Calu3 (cell line): ENCODE measurements at regions of chr4 and their contacts with region 1.

Region 1: GRCh38 chr4:186765138-186765537 is 41.5 kb upstream of the FAT1 start:
- DNase-seq: peak; percentile 75
- H3K4me3 Mint-ChIP-seq: peak overlapping the region; percentile 46
- H3K27ac Mint-ChIP-seq: peak overlapping the region; percentile 89
- H3K4me1 Mint-ChIP-seq: peaks cover 21% of the 10 kb centered on the region
- H3K27me3 Mint-ChIP-seq: no peaks in the 10 kb centered on the region
- CTCF ChIP-seq: no peak

Region 2: GRCh38 chr4:186712690-186713089 is 52.4 kb before region 1 on chr4:
- CTCF ChIA-PET with region 1: no interaction called
- intact Hi-C with region 1: no loop called
- DNase-seq: no peak
- H3K4me3 Mint-ChIP-seq: no peak overlapping the region
- H3K27ac Mint-ChIP-seq: no peak overlapping the region
- H3K4me1 Mint-ChIP-seq: peaks cover 36% of the 10 kb centered on the region
- H3K27me3 Mint-ChIP-seq: no peaks in the 10 kb centered on the region
- CTCF ChIP-seq: no peak

Region 3: DNA sequence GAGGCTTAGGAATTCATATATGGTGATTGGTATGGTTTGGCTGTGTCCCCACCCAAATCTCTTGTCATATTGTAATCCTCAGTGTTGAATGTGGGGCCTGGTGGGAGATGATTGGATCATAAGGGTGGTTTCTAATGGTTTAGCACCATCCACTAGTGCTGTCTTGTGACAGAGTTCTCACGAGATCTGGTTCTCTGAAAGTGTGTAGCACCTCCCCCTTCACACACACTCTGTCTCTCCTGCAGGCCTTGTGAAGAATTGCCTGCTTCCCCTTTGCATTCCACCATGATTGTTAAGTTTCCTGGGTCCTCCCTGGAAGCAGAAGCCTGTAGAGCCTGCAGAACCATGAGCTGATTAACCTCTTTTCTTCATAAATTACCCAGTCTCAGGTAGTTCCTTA is 94.3 kb after region 1 on chr4:
- CTCF ChIA-PET with region 1: no interaction called
- intact Hi-C with region 1: no loop called
- DNase-seq: no peak
- H3K4me3 Mint-ChIP-seq: no peak overlapping the region
- H3K27ac Mint-ChIP-seq: no peak overlapping the region
- H3K4me1 Mint-ChIP-seq: no peaks in the 10 kb centered on the region
- H3K27me3 Mint-ChIP-seq: no peaks in the 10 kb centered on the region
- CTCF ChIP-seq: no peak

Region 4: GRCh38 chr4:186936496-186937375 is 171.6 kb after region 1 on chr4:
- CTCF ChIA-PET with region 1: interaction called, 3 read pairs
- intact Hi-C with region 1: loop called (anchors 1 kb)
- DNase-seq: peak; percentile 22
- H3K4me3 Mint-ChIP-seq: peak overlapping the region; percentile 59
- H3K27ac Mint-ChIP-seq: peak overlapping the region; percentile 97
- H3K4me1 Mint-ChIP-seq: peaks cover 47% of the 10 kb centered on the region
- H3K27me3 Mint-ChIP-seq: no peaks in the 10 kb centered on the region
- CTCF ChIP-seq: no peak

Region 5: GRCh38 chr4:187027272-187027671 is 262.1 kb after region 1 on chr4:
- CTCF ChIA-PET with region 1: no interaction called
- intact Hi-C with region 1: no loop called
- DNase-seq: no peak
- H3K4me3 Mint-ChIP-seq: no peak overlapping the region
- H3K27ac Mint-ChIP-seq: no peak overlapping the region
- H3K4me1 Mint-ChIP-seq: no peaks in the 10 kb centered on the region
- H3K27me3 Mint-ChIP-seq: no peaks in the 10 kb centered on the region
- CTCF ChIP-seq: no peak